Heart right ventricle (tissue), 16 donors: ENCODE measurements at regions of chr2 and their contacts with region 1.

Region 1: DNA sequence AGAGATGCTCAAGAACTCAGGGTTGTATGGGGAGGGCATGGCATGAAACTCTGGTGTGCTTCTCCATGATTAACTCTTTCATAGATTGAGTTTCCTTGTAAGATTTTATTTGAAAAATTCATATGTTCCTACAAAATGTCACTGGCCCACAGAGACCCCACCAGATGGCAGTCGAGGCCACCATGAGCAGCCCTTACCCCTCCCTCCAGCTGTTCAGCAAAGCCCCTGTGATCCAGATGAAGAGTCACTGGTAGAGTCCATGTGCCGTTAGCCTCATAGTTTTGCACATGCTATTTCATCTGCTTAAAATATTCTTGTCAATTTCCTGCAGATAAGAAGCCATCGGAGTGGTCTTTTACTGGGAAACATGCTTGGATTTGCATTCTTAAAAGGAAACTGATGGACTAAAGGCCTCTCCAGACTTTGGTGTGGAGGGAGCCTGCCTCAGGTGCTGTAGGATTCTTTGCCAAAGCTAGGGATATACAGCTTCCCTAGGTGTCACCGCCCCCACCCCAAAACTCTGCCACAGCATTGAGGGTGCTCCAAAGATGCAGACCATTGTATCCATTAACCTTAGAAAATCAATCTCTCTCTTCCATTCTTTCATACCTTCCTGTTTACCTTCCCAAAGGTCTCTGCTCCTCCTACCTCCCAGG is 18.8 kb downstream of the ZNF385B start:
- DNase-seq: no peak
- ATAC-seq: no peak
- H3K4me3 ChIP-seq: no peak overlapping the region
- H3K27ac ChIP-seq: no peak overlapping the region
- H3K4me1 ChIP-seq: no peaks in the 10 kb centered on the region
- H3K27me3 ChIP-seq: peaks cover 0 to 9% (median 0%) of the 10 kb centered on the region in 7 donors
- CTCF ChIP-seq: peak in 6 of 9 donors; percentile 31 to 50 (median 34)

Region 2: DNA sequence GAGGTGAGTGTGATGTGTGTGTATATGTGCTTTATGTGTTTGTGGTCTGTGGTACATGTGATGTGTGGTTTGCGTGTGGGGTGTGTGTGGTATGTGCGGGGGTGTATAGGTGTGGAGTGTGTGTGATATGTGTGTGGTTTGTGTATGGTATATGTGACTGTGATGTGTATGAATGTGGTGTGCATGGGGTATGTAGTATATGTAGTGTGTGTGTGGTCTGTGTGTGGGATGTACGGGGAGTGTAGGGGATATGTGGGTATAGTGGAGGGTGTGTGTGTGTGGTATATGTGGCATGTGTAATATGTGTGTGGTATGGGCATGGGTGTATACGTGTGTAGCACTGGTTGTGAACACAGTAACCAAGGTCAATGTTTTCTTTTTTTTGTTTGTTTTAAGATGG is 68.6 kb before region 1 on chr2:
- intact Hi-C with region 1: no loop called
- DNase-seq: no peak
- ATAC-seq: peak in 2 of 8 donors; percentile 38 to 45
- H3K4me3 ChIP-seq: no peak overlapping the region
- H3K27ac ChIP-seq: no peak overlapping the region
- H3K4me1 ChIP-seq: peaks cover 0 to 5% (median 0%) of the 10 kb centered on the region in 9 donors
- H3K27me3 ChIP-seq: no peaks in the 10 kb centered on the region
- CTCF ChIP-seq: no peak

Region 3: GRCh38 chr2:180077295-180077906 is 234.8 kb after region 1 on chr2:
- intact Hi-C with region 1: loop called in 3 of 10 experiments (anchors 2 to 5 kb)
- DNase-seq: no peak
- ATAC-seq: peak in 1 of 8 donors; percentile 11
- H3K4me3 ChIP-seq: no peak overlapping the region
- H3K27ac ChIP-seq: no peak overlapping the region
- H3K4me1 ChIP-seq: no peaks in the 10 kb centered on the region
- H3K27me3 ChIP-seq: peaks cover 0 to 5% (median 0%) of the 10 kb centered on the region in 7 donors
- CTCF ChIP-seq: peak in 7 of 9 donors; percentile 48 to 64 (median 50)